Sigmoid colon (tissue), 7 donors: ENCODE measurements at regions of chr11 and their contacts with region 1.

Region 1: GRCh38 chr11:10735481-10736475 is 15.3 kb upstream of the CTR9 start:
- DNase-seq: peak; percentile 98
- H3K4me3 ChIP-seq: peak overlapping the region in 3 of 4 donors; percentile 15 to 32 (median 30)
- H3K27ac ChIP-seq: peak overlapping the region; percentile 59 to 77 (median 74)
- H3K4me1 ChIP-seq: peaks cover 0 to 16% (median 10%) of the 10 kb centered on the region in 4 donors
- H3K27me3 ChIP-seq: no peaks in the 10 kb centered on the region
- CTCF ChIP-seq: peak; percentile 97 to 99 (median 98)
- EP300 ChIP-seq: no peak
- POLR2A ChIP-seq: no peak

Region 2: DNA sequence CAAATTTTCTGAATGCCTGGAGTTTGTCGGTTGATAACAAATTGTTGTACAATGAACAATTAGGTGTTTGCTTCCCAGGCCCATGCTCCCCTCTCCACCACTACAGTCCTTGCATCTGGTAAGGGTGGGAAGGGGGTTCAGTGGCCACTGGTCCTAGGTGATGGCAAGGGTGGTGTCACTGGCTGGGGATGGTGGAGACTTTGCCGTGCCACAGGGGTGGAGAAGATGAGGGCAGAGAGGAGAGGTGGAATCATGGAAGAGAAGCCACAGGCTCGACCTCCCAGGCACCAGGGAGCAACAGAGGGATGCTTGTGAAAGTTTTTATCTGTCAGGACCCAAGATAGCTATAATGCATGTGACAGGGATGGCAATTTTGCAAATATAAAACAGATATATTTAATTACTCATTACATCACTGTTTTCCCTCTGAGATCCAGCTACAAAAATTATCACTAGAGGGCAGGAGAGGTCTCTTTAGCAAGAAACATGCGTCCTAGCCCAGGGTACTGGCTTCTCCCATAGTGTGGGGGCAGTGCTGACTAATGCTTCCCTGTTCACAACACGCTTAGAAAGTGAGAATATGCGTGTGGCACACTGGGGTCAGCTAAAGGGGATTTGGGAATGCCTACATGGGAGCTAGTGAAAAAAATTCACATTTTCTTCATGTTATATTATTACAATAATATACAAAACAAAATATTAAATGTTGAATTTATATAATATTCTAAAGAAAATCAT is 329.8 kb before region 1 on chr11:
- intact Hi-C with region 1: loop called (anchors 1 kb)
- DNase-seq: peak; percentile 88
- H3K4me3 ChIP-seq: no peak overlapping the region
- H3K27ac ChIP-seq: no peak overlapping the region
- H3K4me1 ChIP-seq: peaks cover 0 to 35% (median 13%) of the 10 kb centered on the region in 4 donors
- H3K27me3 ChIP-seq: no peaks in the 10 kb centered on the region
- CTCF ChIP-seq: peak; percentile 40 to 76 (median 64)
- EP300 ChIP-seq: no peak
- POLR2A ChIP-seq: no peak

Region 3: GRCh38 chr11:10514210-10514609 is 221.6 kb before region 1 on chr11:
- intact Hi-C with region 1: loop called (anchors 2 kb)
- DNase-seq: no peak
- H3K4me3 ChIP-seq: no peak overlapping the region
- H3K27ac ChIP-seq: no peak overlapping the region
- H3K4me1 ChIP-seq: peaks cover 0 to 5% (median 0%) of the 10 kb centered on the region in 4 donors
- H3K27me3 ChIP-seq: no peaks in the 10 kb centered on the region
- CTCF ChIP-seq: peak in 2 of 4 experiments; percentile 11 to 41
- EP300 ChIP-seq: no peak
- POLR2A ChIP-seq: no peak

Region 4: DNA sequence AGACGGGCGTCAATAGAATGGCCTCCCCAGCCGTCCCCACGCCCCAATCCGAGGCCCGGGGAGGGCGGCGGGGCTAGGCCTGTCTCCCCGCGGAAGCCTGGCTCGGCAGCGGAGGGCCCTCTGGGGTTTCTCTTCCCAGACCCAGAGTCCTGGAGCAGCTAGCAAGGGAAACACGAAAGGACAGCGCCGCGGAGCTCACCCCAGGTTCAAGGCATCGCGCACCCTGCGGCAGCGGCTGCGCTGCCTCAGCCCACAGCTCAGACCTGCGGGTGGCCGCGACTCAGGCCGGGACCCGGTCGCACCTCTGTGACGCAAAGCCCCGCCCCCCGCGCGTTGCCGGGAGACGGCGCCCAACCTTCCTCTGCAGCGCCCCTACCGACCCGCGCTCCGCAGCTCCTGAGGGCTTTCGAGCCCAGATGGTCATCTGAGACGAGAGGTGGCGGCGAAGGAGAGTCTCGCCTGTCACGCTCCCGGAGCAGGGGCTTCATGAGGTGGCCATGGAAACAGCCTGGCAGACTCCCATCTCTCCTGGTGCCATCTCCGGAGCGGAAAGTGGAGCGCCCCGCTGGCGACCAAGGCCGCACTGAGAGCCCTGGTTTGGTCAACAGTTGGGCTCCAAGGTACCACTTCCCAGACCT is 194.7 kb before region 1 on chr11 and contains the start of gene RNF141:
- intact Hi-C with region 1: loop called (anchors 2 kb)
- DNase-seq: peak; percentile 97
- H3K4me3 ChIP-seq: peak within 1 kb of the TSS; percentile 64 to 93 (median 85)
- H3K27ac ChIP-seq: peak within 1 kb of the TSS; percentile 81 to 91 (median 88)
- H3K4me1 ChIP-seq: peaks cover 0 to 14% (median 5%) of the 10 kb centered on the region in 4 donors
- H3K27me3 ChIP-seq: no peaks in the 10 kb centered on the region
- CTCF ChIP-seq: peak; percentile 72 to 88 (median 80)
- EP300 ChIP-seq: peak in 1 of 4 donors; percentile 15
- POLR2A ChIP-seq: peak; percentile 85 to 86
- total RNA-seq, gene RNF141: 19.7 to 30.3 (median 26.5) TPM

Region 5: GRCh38 chr11:10623797-10624761 is 111.7 kb before region 1 on chr11:
- intact Hi-C with region 1: loop called (anchors 1 kb)
- DNase-seq: peak; percentile 76
- H3K4me3 ChIP-seq: no peak overlapping the region
- H3K27ac ChIP-seq: peak overlapping the region; percentile 71 to 87 (median 80)
- H3K4me1 ChIP-seq: peaks cover 0 to 53% (median 45%) of the 10 kb centered on the region in 4 donors
- H3K27me3 ChIP-seq: no peaks in the 10 kb centered on the region
- CTCF ChIP-seq: peak; percentile 18 to 42 (median 34)
- EP300 ChIP-seq: peak in 1 of 4 donors; percentile 9
- POLR2A ChIP-seq: no peak

Region 6: DNA sequence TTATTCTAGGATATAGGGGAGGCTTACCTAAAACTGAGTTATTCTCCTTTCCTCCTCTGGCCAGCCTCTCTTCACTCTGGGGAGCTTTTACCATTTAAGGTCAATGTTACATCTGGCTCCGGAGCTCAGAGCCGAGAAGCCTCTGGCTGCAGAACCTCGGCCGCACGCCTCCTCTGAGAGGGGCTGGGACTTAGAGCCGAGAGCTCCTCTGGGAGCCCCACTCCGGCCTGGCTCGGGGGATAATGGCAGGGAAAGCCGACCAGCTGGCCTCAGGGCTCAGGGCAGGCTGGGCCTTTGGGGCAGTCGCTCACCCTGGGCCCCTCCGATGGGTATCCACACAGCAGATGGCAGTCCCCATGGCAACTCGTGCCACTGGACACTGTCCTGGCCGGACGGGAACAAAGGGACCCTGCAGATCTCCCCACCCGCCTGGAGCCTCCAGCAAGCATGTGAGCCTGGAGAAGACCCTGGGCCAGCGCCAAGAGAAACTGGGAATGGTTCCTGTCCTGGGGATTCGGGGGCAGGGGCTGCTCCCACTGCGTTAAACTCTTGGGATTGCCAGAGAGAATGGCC is 42.2 kb before region 1 on chr11 and contains the start of gene IRAG1:
- intact Hi-C with region 1: loop called (anchors 2 kb)
- DNase-seq: peak; percentile 92
- H3K4me3 ChIP-seq: peak within 1 kb of the TSS; percentile 60 to 70 (median 62)
- H3K27ac ChIP-seq: peak within 1 kb of the TSS; percentile 81 to 96 (median 95)
- H3K4me1 ChIP-seq: peaks cover 0 to 64% (median 37%) of the 10 kb centered on the region in 4 donors
- H3K27me3 ChIP-seq: no peaks in the 10 kb centered on the region
- CTCF ChIP-seq: no peak
- EP300 ChIP-seq: no peak
- POLR2A ChIP-seq: peak; percentile 55 to 67
- total RNA-seq, gene IRAG1: 96.1 to 153 (median 125) TPM

Region 7: DNA sequence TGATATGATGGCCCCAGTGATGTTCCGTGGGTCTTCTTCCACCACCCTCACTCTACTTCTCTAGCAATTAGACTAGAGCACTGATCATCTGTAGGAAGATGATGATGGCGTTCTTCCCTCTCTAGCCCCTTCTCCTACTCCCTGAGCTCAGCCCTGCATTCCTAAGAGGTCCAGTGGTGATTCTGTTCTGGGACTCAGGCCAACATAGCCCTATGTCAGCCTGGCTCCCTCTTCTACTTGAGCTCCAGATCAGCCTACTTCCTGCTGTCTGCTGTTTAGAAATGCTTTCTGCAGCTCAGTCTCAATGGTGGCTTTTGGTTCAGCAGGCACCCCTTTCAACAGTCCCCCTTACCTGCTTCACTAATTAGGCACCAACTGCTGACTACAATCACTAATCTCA is 208.2 kb after region 1 on chr11:
- intact Hi-C with region 1: no loop called
- DNase-seq: no peak
- H3K4me3 ChIP-seq: no peak overlapping the region
- H3K27ac ChIP-seq: peak overlapping the region in 1 of 4 donors; percentile 37
- H3K4me1 ChIP-seq: peaks cover 0 to 48% (median 39%) of the 10 kb centered on the region in 4 donors
- H3K27me3 ChIP-seq: no peaks in the 10 kb centered on the region
- CTCF ChIP-seq: no peak
- EP300 ChIP-seq: no peak
- POLR2A ChIP-seq: no peak